GM13977 (cell line): ENCODE measurements at regions of chr1 and their contacts with region 1.

Region 1: DNA sequence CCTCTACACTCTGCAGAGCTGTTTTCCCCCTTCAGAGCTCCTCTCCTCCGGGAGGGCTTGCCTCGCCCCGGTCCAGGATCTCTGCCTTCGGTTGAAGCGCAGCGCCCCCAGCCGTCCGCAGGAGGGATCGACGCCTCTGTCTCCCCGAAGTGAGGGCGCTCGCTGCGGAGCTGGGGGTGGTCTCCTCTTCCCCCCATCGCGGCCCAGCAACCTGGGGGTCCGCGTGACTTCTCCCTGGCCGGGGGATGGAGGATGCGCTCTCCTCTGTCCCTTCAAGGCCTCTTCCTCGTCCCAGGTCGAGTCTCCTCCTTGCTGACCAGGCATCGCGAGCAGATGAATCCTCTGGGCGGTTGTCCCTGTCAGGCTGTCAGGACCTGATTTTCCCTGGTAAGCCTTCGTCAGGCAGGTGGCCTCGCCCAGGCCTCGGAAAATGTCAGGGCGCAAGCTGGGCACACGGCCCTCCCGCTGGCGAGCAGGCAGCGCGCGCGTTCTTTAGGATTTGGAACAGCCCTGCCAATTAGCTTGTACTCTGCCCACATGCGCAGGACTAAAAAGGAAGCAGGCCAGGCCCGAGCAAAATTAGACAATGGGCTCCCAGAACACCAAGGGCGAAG is 90.5 kb downstream of the EDEM3 start:
- DNase-seq: peak; percentile 68
- CTCF ChIP-seq: peak; percentile 85

Region 2: DNA sequence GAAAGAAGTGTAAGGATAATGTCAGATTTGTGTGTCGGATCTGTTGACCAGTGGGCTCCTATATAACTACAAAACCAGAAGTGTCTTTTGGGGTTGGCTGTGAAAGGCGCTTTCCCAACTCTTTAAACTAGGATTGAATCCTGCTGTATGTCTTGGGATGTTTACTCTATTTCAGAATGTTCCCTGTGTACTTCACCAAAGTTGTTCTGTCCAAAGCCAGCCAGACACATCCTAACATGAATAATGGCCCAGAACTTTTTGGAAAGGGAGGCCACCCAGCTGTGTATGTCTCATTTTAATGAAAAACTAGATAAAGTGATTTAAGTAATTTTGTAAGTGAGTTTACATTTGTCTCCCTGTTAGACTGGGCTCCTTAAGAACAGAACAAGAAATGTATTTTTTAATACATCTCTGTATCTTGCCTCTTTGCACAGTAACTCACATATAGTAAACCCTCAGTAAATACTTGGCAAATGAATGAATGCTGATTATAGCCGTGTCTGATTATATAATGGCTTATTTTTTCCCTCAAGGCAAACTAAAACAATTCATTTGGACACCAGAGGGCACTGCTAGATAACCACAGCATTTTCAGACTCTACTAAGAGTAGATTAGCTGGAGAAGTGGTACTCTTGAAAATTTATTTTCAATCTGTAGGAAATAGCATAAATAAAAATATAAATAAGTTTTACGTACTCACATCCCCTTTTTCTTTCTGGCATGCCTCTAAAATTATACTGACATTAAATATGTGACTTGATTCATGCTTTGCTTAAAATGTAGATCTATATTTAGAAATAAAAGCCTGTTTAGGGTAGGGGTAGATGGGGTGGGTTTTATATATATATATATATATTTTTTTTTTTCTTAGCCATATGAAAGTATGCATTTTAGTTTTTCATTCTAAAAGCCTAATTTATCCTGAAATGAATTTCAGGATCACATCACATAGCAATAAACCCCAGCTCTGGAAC is 588.8 kb before region 1 on chr1:
- in situ Hi-C with region 1: loop called (anchors 25 kb)
- DNase-seq: peak; percentile 28
- CTCF ChIP-seq: peak; percentile 58

Region 3: GRCh38 chr1:184242507-184242943 is 421.6 kb before region 1 on chr1:
- in situ Hi-C with region 1: loop called (anchors 25 kb)
- DNase-seq: no peak
- CTCF ChIP-seq: no peak

Region 4: DNA sequence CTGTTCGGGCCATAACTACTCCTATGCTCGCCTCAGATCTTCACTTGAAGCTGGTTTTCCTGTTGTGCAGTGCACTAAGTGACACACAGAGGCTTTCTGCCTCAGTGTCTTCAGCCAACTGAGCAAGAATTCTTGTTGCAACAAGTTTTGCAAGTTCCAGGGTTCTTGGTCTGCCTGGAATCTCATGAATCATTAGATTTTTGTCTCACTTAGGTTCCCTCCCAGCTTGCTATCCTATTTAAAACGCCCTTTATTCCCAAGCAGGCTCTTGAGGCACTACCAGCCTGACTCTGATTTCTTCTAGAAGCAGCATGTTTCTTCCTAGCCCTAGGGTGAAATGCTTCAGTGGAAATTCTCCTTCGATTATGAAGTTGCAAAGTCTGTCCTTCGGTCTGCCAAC is 118.6 kb before region 1 on chr1:
- in situ Hi-C with region 1: no loop called
- DNase-seq: no peak
- CTCF ChIP-seq: no peak

Region 5: GRCh38 chr1:184610876-184611595 is 53.1 kb before region 1 on chr1:
- in situ Hi-C with region 1: no loop called
- DNase-seq: no peak
- CTCF ChIP-seq: no peak